ENCODE measurements at regions of chr12 and their contacts with region 1.

Region 1: DNA sequence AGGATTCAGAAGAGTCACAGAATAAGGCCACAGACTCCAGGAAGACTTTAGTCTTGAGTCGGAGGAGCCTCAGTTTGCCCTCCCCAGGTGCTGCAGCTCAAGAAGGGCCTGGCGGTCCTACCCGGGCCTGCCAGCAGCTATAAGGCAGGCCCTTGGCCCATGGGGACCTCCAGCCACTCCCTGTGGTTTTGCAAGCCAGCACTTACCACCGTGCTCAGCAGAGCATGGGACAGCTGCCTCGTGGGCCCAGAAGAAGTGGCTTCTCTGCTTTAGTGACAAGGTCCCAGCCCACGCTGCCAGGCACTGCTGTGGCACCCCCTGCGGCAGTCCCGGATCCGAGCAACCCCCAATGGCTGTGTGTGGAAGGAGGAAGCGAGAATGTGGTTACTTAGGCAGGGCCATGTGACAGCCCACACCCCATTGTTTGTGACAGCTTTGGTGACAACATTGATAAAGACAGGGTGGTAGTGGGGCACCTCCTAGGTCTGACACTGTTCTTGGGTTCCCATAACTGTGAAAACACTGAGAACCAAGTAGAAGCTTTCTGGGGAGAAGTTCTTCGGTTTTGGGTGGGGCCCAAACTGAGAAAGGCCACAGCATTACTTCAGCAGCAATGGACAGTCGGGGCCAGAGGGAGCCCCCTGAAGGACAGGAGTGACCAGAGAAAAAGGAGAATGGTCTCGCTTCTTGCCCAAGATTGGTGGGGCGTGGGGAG is at the start of gene SELPLG:
- DNase-seq: peak; percentile 93
- H3K4me3 Mint-ChIP-seq: peak within 1 kb of the TSS; percentile 99
- H3K27ac Mint-ChIP-seq: peak within 1 kb of the TSS; percentile 100
- H3K4me1 Mint-ChIP-seq: peaks cover 55% of the 10 kb centered on the region
- H3K27me3 Mint-ChIP-seq: no peaks in the 10 kb centered on the region
- total RNA-seq, gene SELPLG: 289 to 301 TPM

Region 2: GRCh38 chr12:108468201-108468968 is 165.3 kb before region 1 on chr12:
- CTCF ChIA-PET with region 1: no interaction called
- POLR2A ChIA-PET with region 1: no interaction called
- DNase-seq: no peak
- H3K4me3 Mint-ChIP-seq: no peak overlapping the region
- H3K27ac Mint-ChIP-seq: no peak overlapping the region
- H3K4me1 Mint-ChIP-seq: no peaks in the 10 kb centered on the region
- H3K27me3 Mint-ChIP-seq: no peaks in the 10 kb centered on the region

Region 3: GRCh38 chr12:108562348-108563135 is 71.1 kb before region 1 on chr12 and contains the start of gene ISCU:
- CTCF ChIA-PET with region 1: interaction called, 41 read pairs
- POLR2A ChIA-PET with region 1: interaction called, 385 read pairs
- DNase-seq: peak; percentile 99
- H3K4me3 Mint-ChIP-seq: peak within 1 kb of the TSS; percentile 100
- H3K27ac Mint-ChIP-seq: peak within 1 kb of the TSS; percentile 99
- H3K4me1 Mint-ChIP-seq: peaks cover 63% of the 10 kb centered on the region
- H3K27me3 Mint-ChIP-seq: no peaks in the 10 kb centered on the region
- total RNA-seq, gene ISCU: 69.9 to 74.1 TPM

Region 4: DNA sequence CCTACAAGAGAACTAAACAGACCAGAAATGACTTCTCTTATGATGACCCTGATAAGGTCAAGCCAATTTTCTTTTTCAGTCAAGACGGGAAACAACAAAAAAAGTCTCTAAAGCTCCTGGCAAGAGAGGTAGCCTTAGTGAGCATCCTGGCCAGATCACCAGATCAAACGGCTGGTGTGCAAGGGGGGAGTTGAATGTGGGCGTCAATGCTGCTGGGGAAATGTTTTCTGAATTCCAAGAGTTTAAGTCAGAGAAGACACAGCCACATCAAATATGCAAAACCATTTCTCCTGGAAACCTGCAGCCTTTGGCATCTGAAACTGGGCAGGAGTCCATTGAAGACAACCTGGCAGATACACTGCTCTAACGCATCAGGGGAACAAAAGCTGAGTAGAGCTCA is 16.0 kb after region 1 on chr12:
- CTCF ChIA-PET with region 1: interaction called, 13 read pairs
- POLR2A ChIA-PET with region 1: interaction called, 84 read pairs
- DNase-seq: no peak
- H3K4me3 Mint-ChIP-seq: no peak overlapping the region
- H3K27ac Mint-ChIP-seq: no peak overlapping the region
- H3K4me1 Mint-ChIP-seq: peaks cover 34% of the 10 kb centered on the region
- H3K27me3 Mint-ChIP-seq: no peaks in the 10 kb centered on the region

Region 5: GRCh38 chr12:108731105-108731865 is 97.6 kb after region 1 on chr12 and contains the start of gene CORO1C:
- CTCF ChIA-PET with region 1: interaction called, 3 read pairs
- POLR2A ChIA-PET with region 1: interaction called, 10 read pairs
- DNase-seq: peak; percentile 98
- H3K4me3 Mint-ChIP-seq: peak within 1 kb of the TSS; percentile 93
- H3K27ac Mint-ChIP-seq: peak within 1 kb of the TSS; percentile 89
- H3K4me1 Mint-ChIP-seq: peaks cover 35% of the 10 kb centered on the region
- H3K27me3 Mint-ChIP-seq: peaks cover 16% of the 10 kb centered on the region
- total RNA-seq, gene CORO1C: 30.9 to 35.7 TPM

Region 6: GRCh38 chr12:108833355-108833733 is 199.7 kb after region 1 on chr12:
- CTCF ChIA-PET with region 1: interaction called, 3 read pairs
- POLR2A ChIA-PET with region 1: interaction called, 40 read pairs
- DNase-seq: no peak
- H3K4me3 Mint-ChIP-seq: no peak overlapping the region
- H3K27ac Mint-ChIP-seq: peak overlapping the region; percentile 61
- H3K4me1 Mint-ChIP-seq: peaks cover 88% of the 10 kb centered on the region
- H3K27me3 Mint-ChIP-seq: no peaks in the 10 kb centered on the region

Region 7: DNA sequence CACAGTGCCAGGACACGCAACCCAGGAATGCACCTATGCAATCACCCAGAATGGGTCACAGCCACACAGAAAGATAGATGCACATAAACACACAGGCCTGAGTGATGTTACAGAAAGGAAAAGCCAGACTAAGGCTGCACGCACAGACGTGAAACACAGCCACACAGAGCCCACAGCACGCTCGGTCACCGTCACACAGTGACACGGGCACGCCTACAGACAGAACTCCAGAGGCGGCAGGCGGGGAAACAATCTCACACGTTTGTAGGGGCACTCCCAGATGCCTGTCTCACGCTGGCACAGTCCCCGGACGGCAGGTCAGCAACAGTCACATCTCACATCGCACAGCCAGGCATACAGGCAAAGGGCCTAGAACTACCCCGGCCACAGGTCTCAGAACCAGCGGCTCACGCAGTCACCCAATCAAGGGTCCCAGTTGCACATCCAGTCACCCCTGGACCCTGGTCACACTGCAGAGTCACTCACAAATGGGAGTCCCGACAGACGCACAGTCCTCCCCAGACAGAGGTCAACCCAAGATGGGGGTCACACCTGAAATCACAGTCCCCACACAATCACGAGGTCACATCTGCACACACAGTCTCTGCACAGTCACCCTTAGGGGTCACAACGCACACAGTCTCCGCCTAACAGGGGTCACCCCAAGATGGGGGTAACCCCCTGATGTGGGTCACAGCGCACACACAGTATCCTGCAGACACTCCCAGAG is 222.9 kb after region 1 on chr12:
- CTCF ChIA-PET with region 1: no interaction called
- POLR2A ChIA-PET with region 1: interaction called, 21 read pairs
- DNase-seq: peak; percentile 67
- H3K4me3 Mint-ChIP-seq: peak overlapping the region; percentile 93
- H3K27ac Mint-ChIP-seq: peak overlapping the region; percentile 96
- H3K4me1 Mint-ChIP-seq: peaks cover 70% of the 10 kb centered on the region
- H3K27me3 Mint-ChIP-seq: peaks cover 2% of the 10 kb centered on the region